CD14-positive monocyte (primary cell): ENCODE measurements at regions of chr3 and their contacts with region 1.

Region 1: GRCh38 chr3:107938143-107938542 is 152.7 kb downstream of the CD47 start:
- DNase-seq: peak in 2 of 3 donors; percentile 16 to 23
- H3K4me3 ChIP-seq: no peak overlapping the region
- H3K4me3 Mint-ChIP-seq: no peak overlapping the region
- H3K27ac ChIP-seq: no peak overlapping the region
- H3K27ac Mint-ChIP-seq: no peak overlapping the region
- H3K4me1 ChIP-seq: no peaks in the 10 kb centered on the region
- H3K4me1 Mint-ChIP-seq: peaks cover 4% of the 10 kb centered on the region
- H3K27me3 ChIP-seq: peaks cover 0 to 2% of the 10 kb centered on the region in 2 donors
- H3K27me3 Mint-ChIP-seq: peaks cover 0 to 2% (median 0%) of the 10 kb centered on the region in 3 donors
- CTCF ChIP-seq: peak; percentile 47

Region 2: GRCh38 chr3:108036984-108037741 is 99.0 kb after region 1 on chr3:
- intact Hi-C with region 1: loop called in 1 of 2 experiments (anchors 10 kb)
- DNase-seq: peak; percentile 8 to 40 (median 27)
- H3K4me3 ChIP-seq: peak overlapping the region in 1 of 3 experiments; percentile 38
- H3K4me3 Mint-ChIP-seq: peak overlapping the region in 1 of 2 donors; percentile 26
- H3K27ac ChIP-seq: peak overlapping the region in 1 of 2 donors; percentile 65
- H3K27ac Mint-ChIP-seq: peak overlapping the region; percentile 56 to 86 (median 63)
- H3K4me1 ChIP-seq: peaks cover 34 to 40% of the 10 kb centered on the region in 2 donors
- H3K4me1 Mint-ChIP-seq: peaks cover 44% of the 10 kb centered on the region
- H3K27me3 ChIP-seq: no peaks in the 10 kb centered on the region
- H3K27me3 Mint-ChIP-seq: no peaks in the 10 kb centered on the region
- CTCF ChIP-seq: no peak

Region 3: DNA sequence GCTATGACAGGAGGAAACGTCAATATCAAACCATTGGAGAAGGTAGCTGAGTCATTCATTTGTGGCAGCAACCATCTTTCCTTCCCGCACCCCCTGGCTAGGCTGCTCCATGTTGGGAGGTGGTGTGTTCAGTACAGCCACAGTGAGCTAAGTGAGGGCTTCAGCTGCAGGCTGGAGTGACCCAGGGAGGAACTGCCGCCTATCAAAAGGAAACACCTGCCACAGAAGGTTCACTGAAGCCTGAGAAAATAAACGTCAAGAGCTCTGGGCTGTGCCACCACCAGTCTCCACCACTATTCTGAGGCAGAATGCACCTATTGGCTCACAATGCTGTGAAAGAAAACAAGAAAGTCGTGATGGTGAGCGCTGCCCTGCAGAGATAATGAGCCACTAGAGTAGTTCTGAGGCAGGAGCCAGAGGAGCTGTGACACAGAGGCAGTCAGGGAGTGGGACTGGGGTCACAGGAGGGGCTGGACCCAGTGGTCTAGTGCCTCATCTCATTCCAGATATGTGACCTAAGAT is 187.5 kb after region 1 on chr3:
- intact Hi-C with region 1: no loop called
- DNase-seq: peak in 1 of 3 donors; percentile 53
- H3K4me3 ChIP-seq: peak overlapping the region in 1 of 3 experiments; percentile 42
- H3K4me3 Mint-ChIP-seq: peak overlapping the region in 1 of 2 donors; percentile 16
- H3K27ac ChIP-seq: peak overlapping the region; percentile 31 to 97
- H3K27ac Mint-ChIP-seq: peak overlapping the region; percentile 97 to 100 (median 99)
- H3K4me1 ChIP-seq: peaks cover 34 to 39% of the 10 kb centered on the region in 2 donors
- H3K4me1 Mint-ChIP-seq: peaks cover 53% of the 10 kb centered on the region
- H3K27me3 ChIP-seq: no peaks in the 10 kb centered on the region
- H3K27me3 Mint-ChIP-seq: peaks cover 0 to 9% (median 0%) of the 10 kb centered on the region in 3 donors
- CTCF ChIP-seq: no peak